ENCODE measurements at regions of chr2 and their contacts with region 1.

Region 1: GRCh38 chr2:164479460-164479859 is 141.8 kb downstream of the GRB14 start:
- DNase-seq: no peak

Region 2: DNA sequence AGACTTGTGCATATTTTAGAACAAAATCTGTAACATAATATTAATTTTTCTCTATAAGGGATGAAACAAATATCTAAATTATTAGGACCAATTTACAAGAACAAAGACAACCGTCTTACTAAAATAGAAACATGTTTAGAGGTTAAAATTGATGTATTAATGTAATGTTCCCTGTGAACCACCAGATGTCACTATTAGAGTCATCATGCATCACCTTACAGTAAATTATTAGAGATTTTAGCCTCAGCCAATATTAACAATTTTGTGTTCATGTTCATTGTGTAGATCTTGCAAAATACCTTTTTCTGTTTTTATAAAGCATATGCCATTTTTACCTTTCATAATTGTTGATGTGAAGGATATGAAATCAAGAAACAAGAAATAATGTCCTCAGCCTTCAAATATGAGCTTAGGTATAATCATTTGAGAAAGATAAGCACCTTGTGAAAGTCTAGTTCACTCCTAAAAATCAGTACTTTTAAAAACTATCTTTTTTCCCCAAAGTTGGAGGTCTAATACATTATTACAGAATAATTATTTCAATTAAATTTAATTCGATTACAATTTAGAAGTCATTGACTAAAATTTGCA is 1296.6 kb before region 1 on chr2:
- intact Hi-C with region 1: loop called (anchors 5 kb)
- DNase-seq: no peak

Region 3: DNA sequence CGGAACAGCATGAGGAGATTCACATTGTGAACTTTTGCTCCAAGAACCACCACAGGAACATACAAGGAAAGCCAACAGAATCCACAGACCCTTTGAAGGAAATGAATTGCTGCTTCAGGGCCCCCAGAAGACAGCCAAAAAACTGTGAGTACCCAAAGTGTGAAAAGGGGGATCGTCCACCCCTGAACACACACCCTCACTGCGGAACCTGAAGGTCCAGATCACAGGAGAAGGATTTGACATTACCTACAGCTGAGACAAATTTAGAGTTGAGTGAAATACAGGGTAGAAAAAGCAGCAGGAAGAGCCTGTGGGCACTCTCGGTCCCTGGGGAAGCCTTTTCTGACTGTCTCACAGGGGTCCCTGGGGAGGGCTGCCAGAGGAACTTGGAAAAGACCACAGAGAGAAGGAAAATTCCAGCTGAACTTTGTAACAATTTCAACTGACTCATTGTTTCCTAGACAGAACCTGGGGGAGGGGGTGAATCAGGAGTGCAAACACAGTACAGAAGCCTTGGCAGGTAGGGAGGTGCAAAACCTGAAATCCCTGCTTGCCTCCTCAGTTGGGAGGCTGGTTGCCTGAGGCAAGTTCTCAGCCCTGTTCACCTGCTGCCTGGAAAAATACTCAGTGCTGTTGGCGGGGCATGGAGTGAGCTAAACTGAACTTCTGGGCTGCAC is 34.9 kb after region 1 on chr2:
- intact Hi-C with region 1: no loop called
- DNase-seq: no peak

Measured in cardiac septum (tissue), 1 donor.